ENCODE measurements at regions of chr6 and their contacts with region 1.

Region 1: GRCh38 chr6:25717866-25718740 is 36.4 kb upstream of the SLC17A4 start:
- DNase-seq: no peak
- ATAC-seq: no peak

Region 2: GRCh38 chr6:25992413-25993037 is 274.4 kb after region 1 on chr6:
- intact Hi-C with region 1: no loop called
- DNase-seq: peak; percentile 98
- ATAC-seq: peak; percentile 98

Region 3: GRCh38 chr6:26003102-26003694 is 285.1 kb after region 1 on chr6:
- intact Hi-C with region 1: loop called (anchors 5 kb)
- DNase-seq: peak; percentile 48
- ATAC-seq: peak; percentile 75